K562 (cell line): ENCODE measurements at regions of chr3 and their contacts with region 1.

Region 1: GRCh38 chr3:10300087-10300486 is 7.3 kb upstream of the GHRL start:
- DNase-seq: no peak
- ATAC-seq: no peak
- H3K4me3 ChIP-seq: no peak overlapping the region
- H3K27ac ChIP-seq: no peak overlapping the region
- H3K4me1 ChIP-seq: no peaks in the 10 kb centered on the region
- H3K27me3 ChIP-seq: no peaks in the 10 kb centered on the region
- CTCF ChIP-seq: no peak
- EP300 ChIP-seq: no peak
- POLR2A ChIP-seq: peak; percentile 55; the same call in 1 of the 2 replicates
- RAD21 ChIP-seq: no peak

Region 2: GRCh38 chr3:10311710-10312109 is 11.6 kb after region 1 on chr3:
- CTCF ChIA-PET with region 1: no interaction called
- POLR2A ChIA-PET with region 1: interaction called, 30 read pairs
- in situ Hi-C with region 1: no loop called
- intact Hi-C with region 1: no loop called
- DNase-seq: no peak
- ATAC-seq: no peak; the same call in 1 of the 3 replicates
- H3K4me3 ChIP-seq: no peak overlapping the region
- H3K27ac ChIP-seq: no peak overlapping the region
- H3K4me1 ChIP-seq: peaks cover 0 to 5% of the 10 kb centered on the region in 2 experiments; a peak in 1 of 5 replicates
- H3K27me3 ChIP-seq: no peaks in the 10 kb centered on the region
- CTCF ChIP-seq: no peak
- EP300 ChIP-seq: no peak
- POLR2A ChIP-seq: no peak
- RAD21 ChIP-seq: no peak